Activated T-helper 1 cell treated with anti-CD3 and anti-CD28 coated beads, Interleukin-12 subunit alpha, Interleukin-12 subunit beta, Interleukin-2, Interleukin-4 antibody, amounts not matched to agents 30 ng/mL and 10 ng/mL and 1 ng/mL, durations not matched to agents 14 hours and 24 hours and 36 hours (primary cell): ENCODE measurements at regions of chr1 and their contacts with region 1.

Region 1: GRCh38 chr1:202160377-202160940 is at the start of gene PTPN7:
- DNase-seq: peak; percentile 59
- H3K4me3 Mint-ChIP-seq: peak within 1 kb of the TSS; percentile 98
- H3K27ac Mint-ChIP-seq: peak within 1 kb of the TSS; percentile 94
- H3K4me1 Mint-ChIP-seq: peaks cover 77% of the 10 kb centered on the region
- H3K27me3 Mint-ChIP-seq: no peaks in the 10 kb centered on the region
- total RNA-seq, gene PTPN7: 584 and 597 TPM in 2 replicates

Region 2: GRCh38 chr1:202144402-202145067 is 15.9 kb before region 1 on chr1 and contains the start of gene ARL8A:
- intact Hi-C with region 1: loop called (anchors 1 kb)
- DNase-seq: peak; percentile 71
- H3K4me3 Mint-ChIP-seq: peak within 1 kb of the TSS; percentile 88
- H3K27ac Mint-ChIP-seq: peak within 1 kb of the TSS; percentile 91
- H3K4me1 Mint-ChIP-seq: peaks cover 26% of the 10 kb centered on the region
- H3K27me3 Mint-ChIP-seq: no peaks in the 10 kb centered on the region
- total RNA-seq, gene ARL8A: 56.6 and 69.0 TPM in 2 replicates

Region 3: GRCh38 chr1:202184750-202185460 is 24.4 kb after region 1 on chr1:
- intact Hi-C with region 1: loop called (anchors 2 kb)
- DNase-seq: peak; percentile 48
- H3K4me3 Mint-ChIP-seq: no peak overlapping the region
- H3K27ac Mint-ChIP-seq: no peak overlapping the region
- H3K4me1 Mint-ChIP-seq: peaks cover 24% of the 10 kb centered on the region
- H3K27me3 Mint-ChIP-seq: peaks cover 5% of the 10 kb centered on the region